ENCODE measurements at regions of chr1 and their contacts with region 1.

Region 1: DNA sequence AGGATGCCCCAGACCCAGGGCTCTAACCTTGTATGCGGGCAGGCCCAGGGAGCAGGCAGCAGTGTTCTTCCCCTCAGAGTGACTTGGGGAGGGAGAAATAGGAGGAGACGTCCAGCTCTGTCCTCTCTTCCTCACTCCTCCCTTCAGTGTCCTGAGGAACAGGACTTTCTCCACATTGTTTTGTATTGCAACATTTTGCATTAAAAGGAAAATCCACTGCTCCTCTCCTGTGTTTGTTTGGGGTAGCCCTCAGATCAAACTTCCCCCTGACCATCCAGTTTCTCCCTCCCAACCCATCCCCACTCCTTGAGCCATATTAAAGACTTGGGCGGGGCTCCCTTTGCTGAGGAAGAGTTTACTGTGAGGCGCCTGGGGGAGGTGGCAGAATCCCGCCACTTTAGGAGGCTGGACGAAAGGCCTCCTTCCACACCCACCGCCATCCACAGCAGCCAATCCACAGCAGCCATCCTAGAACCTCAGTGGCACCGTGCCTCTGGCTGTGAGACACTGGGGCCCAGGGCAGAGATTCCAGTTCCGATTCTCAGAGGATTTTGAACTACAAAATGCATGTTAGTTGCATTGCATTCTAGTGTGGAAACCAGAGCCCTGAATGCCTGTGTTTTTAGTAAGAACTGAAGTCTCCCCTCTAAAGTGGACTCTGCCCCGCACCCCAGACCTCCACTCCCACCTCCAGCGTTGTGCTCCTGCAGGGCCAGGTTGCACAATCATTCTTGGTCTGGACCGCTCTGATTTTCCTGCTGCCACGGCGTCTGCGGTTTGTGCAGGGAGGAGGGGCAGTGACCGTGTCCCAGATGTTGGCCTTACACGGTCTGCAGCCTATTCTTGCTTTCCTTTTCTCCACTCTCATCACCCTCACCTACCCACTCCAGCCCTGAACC is 3.0 kb downstream of the OLFML3 start:
- DNase-seq: peak; percentile 81
- ATAC-seq: peak; percentile 85

Region 2: GRCh38 chr1:113949007-113949406 is 33.3 kb before region 1 on chr1:
- intact Hi-C with region 1: no loop called
- DNase-seq: no peak
- ATAC-seq: peak; percentile 89

Region 3: GRCh38 chr1:114282751-114283403 is 300.6 kb after region 1 on chr1:
- intact Hi-C with region 1: loop called (anchors 10 kb)
- DNase-seq: peak; percentile 93
- ATAC-seq: peak; percentile 98

Measured in sciatic nerve (tissue), 2 donors.